Heart right ventricle (tissue), 16 donors: ENCODE measurements at regions of chr2 and their contacts with region 1.

Region 1: DNA sequence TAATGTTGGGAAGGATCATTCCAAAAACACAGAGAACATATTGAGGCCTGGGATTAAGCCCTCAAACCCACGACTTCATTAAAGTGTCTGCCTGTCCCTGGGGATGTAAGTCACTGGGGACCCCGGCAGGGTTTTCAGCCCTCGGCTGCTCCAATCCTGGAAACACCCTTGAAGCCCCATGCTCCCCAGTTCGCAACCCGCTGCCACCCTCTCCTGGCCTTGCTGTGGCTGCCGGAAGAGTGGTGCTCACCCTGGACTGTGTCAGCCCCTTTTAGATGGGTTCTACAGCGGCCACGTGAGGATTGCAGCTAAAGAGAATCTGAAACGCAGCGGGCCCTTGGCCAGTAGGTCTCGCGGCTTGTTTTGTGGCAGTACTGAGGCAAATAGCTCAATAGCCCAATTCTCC is 80.0 kb downstream of the EPAS1 start:
- DNase-seq: peak in 1 of 2 donors; percentile 43
- ATAC-seq: peak in 7 of 8 donors; percentile 13 to 64 (median 27)
- H3K4me3 ChIP-seq: no peak overlapping the region
- H3K27ac ChIP-seq: peak overlapping the region in 8 of 10 donors; percentile 3 to 52 (median 38)
- H3K4me1 ChIP-seq: peaks cover 0 to 68% (median 13%) of the 10 kb centered on the region in 9 donors
- H3K27me3 ChIP-seq: no peaks in the 10 kb centered on the region
- CTCF ChIP-seq: peak in 2 of 9 donors; percentile 18 to 23

Region 2: DNA sequence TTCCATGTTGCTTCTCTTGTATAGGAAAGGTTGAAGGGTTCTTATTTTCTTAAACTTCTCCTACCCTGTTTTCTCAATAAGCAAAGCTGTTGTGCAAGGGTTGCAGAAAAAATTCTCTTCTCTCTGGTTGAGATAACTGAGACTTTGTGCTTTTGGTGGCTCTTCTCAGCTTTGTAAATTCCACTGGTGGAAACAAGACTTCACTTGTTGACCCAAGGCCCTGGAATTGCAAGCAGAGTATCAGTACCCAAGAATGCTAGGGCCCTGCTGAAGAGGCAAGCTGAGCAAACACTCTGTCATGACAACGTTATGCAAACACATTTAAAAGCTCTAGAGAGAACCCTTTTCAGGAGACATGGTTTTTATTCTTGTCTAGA is 374.7 kb before region 1 on chr2:
- intact Hi-C with region 1: loop called in 1 of 10 experiments (anchors 10 kb)
- DNase-seq: no peak
- ATAC-seq: peak; percentile 30 to 57 (median 44)
- H3K4me3 ChIP-seq: no peak overlapping the region
- H3K27ac ChIP-seq: peak overlapping the region in 8 of 10 donors; percentile 6 to 60 (median 37)
- H3K4me1 ChIP-seq: peaks cover 0 to 31% (median 18%) of the 10 kb centered on the region in 9 donors
- H3K27me3 ChIP-seq: no peaks in the 10 kb centered on the region
- CTCF ChIP-seq: no peak